Panc1 (cell line): ENCODE measurements at regions of chr16 and their contacts with region 1.

Region 1: DNA sequence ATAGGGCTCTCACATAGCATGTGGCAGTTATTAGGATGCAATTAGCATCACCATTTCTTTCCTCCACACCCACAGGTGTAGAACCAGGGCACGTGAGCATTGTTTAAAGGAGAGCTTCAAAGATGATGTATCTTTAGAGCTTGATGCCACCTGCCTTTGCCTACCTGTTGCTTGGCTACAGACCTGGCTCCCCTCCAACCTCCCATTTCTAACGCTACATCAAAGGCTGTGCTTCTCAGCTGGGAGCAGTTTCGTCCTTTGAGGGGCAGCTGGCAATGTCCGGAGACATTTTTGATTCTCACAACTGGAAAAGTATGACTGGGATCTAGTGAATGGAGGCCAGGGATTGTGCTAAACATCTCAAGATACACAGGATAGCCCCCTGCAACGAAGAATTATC is 78.5 kb upstream of the CLEC3A start:
- DNase-seq: no peak
- ATAC-seq: no peak
- H3K4me3 ChIP-seq: no peak overlapping the region
- H3K27ac ChIP-seq: no peak overlapping the region
- H3K4me1 ChIP-seq: no peaks in the 10 kb centered on the region
- H3K27me3 ChIP-seq: peaks cover 4% of the 10 kb centered on the region; the same call in 1 of the 2 replicates
- CTCF ChIP-seq: no peak

Region 2: GRCh38 chr16:77450563-77451487 is 493.0 kb before region 1 on chr16:
- CTCF ChIA-PET with region 1: interaction called, 10 read pairs
- POLR2A ChIA-PET with region 1: no interaction called
- in situ Hi-C with region 1: no loop called
- intact Hi-C with region 1: no loop called
- DNase-seq: no peak
- ATAC-seq: no peak; the same call in 1 of the 2 replicates
- H3K4me3 ChIP-seq: no peak overlapping the region
- H3K27ac ChIP-seq: no peak overlapping the region
- H3K4me1 ChIP-seq: 0 out of 2 replicates have a peak, but pooled peaks cover 2% of the 10 kb centered on the region
- H3K27me3 ChIP-seq: no peaks in the 10 kb centered on the region
- CTCF ChIP-seq: no peak

Region 3: GRCh38 chr16:77918809-77919707 is 24.7 kb before region 1 on chr16:
- CTCF ChIA-PET with region 1: interaction called, 12 read pairs
- POLR2A ChIA-PET with region 1: no interaction called
- in situ Hi-C with region 1: no loop called
- intact Hi-C with region 1: no loop called
- DNase-seq: no peak
- ATAC-seq: no peak
- H3K4me3 ChIP-seq: no peak overlapping the region
- H3K27ac ChIP-seq: no peak overlapping the region
- H3K4me1 ChIP-seq: no peaks in the 10 kb centered on the region
- H3K27me3 ChIP-seq: peaks cover 5% of the 10 kb centered on the region; the same call in 1 of the 2 replicates
- CTCF ChIP-seq: no peak